Heart left ventricle (tissue), 16 donors: ENCODE measurements at regions of chr1 and their contacts with region 1.

Region 1: GRCh38 chr1:205591522-205592351 is 40.1 kb downstream of the ELK4 start:
- DNase-seq: peak; percentile 82 to 91 (median 84)
- ATAC-seq: peak; percentile 76 to 97 (median 95)
- H3K4me3 ChIP-seq: peak overlapping the region in 11 of 12 donors; percentile 19 to 59 (median 48)
- H3K27ac ChIP-seq: peak overlapping the region in 3 of 12 donors; percentile 48 to 64 (median 58)
- H3K4me1 ChIP-seq: peaks cover 0 to 28% (median 13%) of the 10 kb centered on the region in 12 donors
- H3K27me3 ChIP-seq: no peaks in the 10 kb centered on the region
- CTCF ChIP-seq: peak; percentile 95 to 99 (median 98)
- POLR2A ChIP-seq: no peak

Region 2: GRCh38 chr1:205528887-205529825 is 62.6 kb before region 1 on chr1:
- intact Hi-C with region 1: loop called in 2 of 10 experiments (anchors 5 kb)
- DNase-seq: peak; percentile 77 to 90 (median 82)
- ATAC-seq: peak; percentile 31 to 75 (median 60)
- H3K4me3 ChIP-seq: peak overlapping the region in 9 of 12 donors; percentile 21 to 50 (median 46)
- H3K27ac ChIP-seq: peak overlapping the region in 2 of 12 donors; percentile 36 to 53
- H3K4me1 ChIP-seq: peaks cover 0 to 34% (median 18%) of the 10 kb centered on the region in 12 donors
- H3K27me3 ChIP-seq: no peaks in the 10 kb centered on the region
- CTCF ChIP-seq: peak; percentile 90 to 98 (median 94)
- POLR2A ChIP-seq: no peak

Region 3: GRCh38 chr1:205631727-205632373 is 40.1 kb after region 1 on chr1 and contains the start of gene ELK4:
- intact Hi-C with region 1: loop called (anchors 1 to 5 kb)
- DNase-seq: peak; percentile 99 to 100 (median 99)
- ATAC-seq: peak; percentile 99 to 100 (median 99)
- H3K4me3 ChIP-seq: peak within 1 kb of the TSS; percentile 47 to 88 (median 74)
- H3K27ac ChIP-seq: peak within 1 kb of the TSS; percentile 89 to 97 (median 95)
- H3K4me1 ChIP-seq: peaks cover 4 to 50% (median 22%) of the 10 kb centered on the region in 12 donors
- H3K27me3 ChIP-seq: no peaks in the 10 kb centered on the region
- CTCF ChIP-seq: peak; percentile 67 to 92 (median 76)
- POLR2A ChIP-seq: peak in 1 of 2 donors; percentile 97
- total RNA-seq, gene ELK4: 18.5 to 54.9 (median 36.5) TPM

Region 4: GRCh38 chr1:205711104-205712020 is 119.6 kb after region 1 on chr1:
- intact Hi-C with region 1: loop called in 7 of 10 experiments (anchors 2 to 10 kb)
- DNase-seq: peak in 4 of 5 donors; percentile 40 to 70 (median 62)
- ATAC-seq: peak; percentile 43 to 83 (median 80)
- H3K4me3 ChIP-seq: no peak overlapping the region
- H3K27ac ChIP-seq: no peak overlapping the region
- H3K4me1 ChIP-seq: peaks cover 0 to 28% (median 10%) of the 10 kb centered on the region in 12 donors
- H3K27me3 ChIP-seq: no peaks in the 10 kb centered on the region
- CTCF ChIP-seq: peak; percentile 77 to 95 (median 88)
- POLR2A ChIP-seq: no peak

Region 5: GRCh38 chr1:206106328-206107167 is 514.8 kb after region 1 on chr1:
- intact Hi-C with region 1: loop called in 1 of 10 experiments (anchors 10 kb)
- DNase-seq: peak; percentile 75 to 86 (median 80)
- ATAC-seq: peak; percentile 66 to 88 (median 84)
- H3K4me3 ChIP-seq: no peak overlapping the region
- H3K27ac ChIP-seq: no peak overlapping the region
- H3K4me1 ChIP-seq: peaks cover 0 to 14% (median 0%) of the 10 kb centered on the region in 12 donors
- H3K27me3 ChIP-seq: no peaks in the 10 kb centered on the region
- CTCF ChIP-seq: peak; percentile 81 to 93 (median 88)
- POLR2A ChIP-seq: no peak